ENCODE measurements at regions of chr1 and their contacts with region 1.

Region 1: GRCh38 chr1:171313835-171314320 is at the start of gene FMO4:
- DNase-seq: peak; percentile 92
- H3K4me3 Mint-ChIP-seq: peak within 1 kb of the TSS; percentile 71
- H3K27ac Mint-ChIP-seq: peak within 1 kb of the TSS; percentile 69
- H3K4me1 Mint-ChIP-seq: peaks cover 14% of the 10 kb centered on the region
- H3K27me3 Mint-ChIP-seq: no peaks in the 10 kb centered on the region
- total RNA-seq, gene FMO4: 2.0 to 2.1 TPM

Region 2: DNA sequence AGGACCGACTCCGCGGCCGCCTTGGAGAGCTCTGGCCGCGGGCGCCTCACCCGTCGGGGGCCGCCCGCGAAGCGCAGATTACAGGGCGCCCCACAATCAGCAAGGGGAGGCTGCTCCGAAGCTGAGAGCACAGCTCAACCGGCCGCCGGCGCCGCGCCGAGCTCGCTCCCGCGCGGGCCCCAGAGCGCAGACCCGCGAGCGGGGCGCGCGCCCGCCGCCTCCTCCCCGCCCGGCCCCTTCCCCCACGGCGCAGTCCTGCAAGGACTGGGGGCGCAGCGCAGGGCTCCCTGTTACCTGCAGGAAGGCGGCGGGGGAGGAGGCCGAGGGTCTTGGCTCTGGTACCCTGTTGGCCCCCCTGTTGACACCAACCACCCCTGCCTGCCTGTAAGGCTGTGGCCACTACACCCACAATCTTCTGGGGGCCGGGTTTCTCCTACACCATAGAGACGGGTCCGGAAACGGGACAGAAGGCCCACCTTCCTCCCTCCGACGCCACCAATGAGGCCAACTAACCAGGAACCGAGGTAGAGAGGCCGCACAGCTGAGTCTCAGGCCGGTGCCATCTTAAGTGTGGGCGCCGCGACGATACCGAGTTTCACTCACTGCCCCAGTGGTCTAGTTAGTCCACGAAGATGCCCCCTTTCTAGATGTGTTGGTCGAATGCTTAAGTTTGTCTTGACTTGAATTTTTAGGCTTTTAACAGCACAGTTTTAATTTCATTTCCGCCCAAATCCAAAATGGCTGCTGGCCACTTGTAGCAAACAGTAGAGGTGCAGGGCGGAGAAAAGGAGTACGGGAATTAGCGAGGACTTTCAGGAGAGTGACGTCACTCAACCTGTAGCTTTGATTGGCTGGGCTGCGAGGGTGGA is 1420.2 kb before region 1 on chr1 and contains the start of gene SCYL3:
- CTCF ChIA-PET with region 1: no interaction called
- intact Hi-C with region 1: loop called (anchors 2 kb)
- DNase-seq: peak; percentile 94
- H3K4me3 Mint-ChIP-seq: peak within 1 kb of the TSS; percentile 87
- H3K27ac Mint-ChIP-seq: peak within 1 kb of the TSS; percentile 100
- H3K4me1 Mint-ChIP-seq: peaks cover 34% of the 10 kb centered on the region
- H3K27me3 Mint-ChIP-seq: no peaks in the 10 kb centered on the region
- total RNA-seq, gene SCYL3: 8.8 TPM

Region 3: DNA sequence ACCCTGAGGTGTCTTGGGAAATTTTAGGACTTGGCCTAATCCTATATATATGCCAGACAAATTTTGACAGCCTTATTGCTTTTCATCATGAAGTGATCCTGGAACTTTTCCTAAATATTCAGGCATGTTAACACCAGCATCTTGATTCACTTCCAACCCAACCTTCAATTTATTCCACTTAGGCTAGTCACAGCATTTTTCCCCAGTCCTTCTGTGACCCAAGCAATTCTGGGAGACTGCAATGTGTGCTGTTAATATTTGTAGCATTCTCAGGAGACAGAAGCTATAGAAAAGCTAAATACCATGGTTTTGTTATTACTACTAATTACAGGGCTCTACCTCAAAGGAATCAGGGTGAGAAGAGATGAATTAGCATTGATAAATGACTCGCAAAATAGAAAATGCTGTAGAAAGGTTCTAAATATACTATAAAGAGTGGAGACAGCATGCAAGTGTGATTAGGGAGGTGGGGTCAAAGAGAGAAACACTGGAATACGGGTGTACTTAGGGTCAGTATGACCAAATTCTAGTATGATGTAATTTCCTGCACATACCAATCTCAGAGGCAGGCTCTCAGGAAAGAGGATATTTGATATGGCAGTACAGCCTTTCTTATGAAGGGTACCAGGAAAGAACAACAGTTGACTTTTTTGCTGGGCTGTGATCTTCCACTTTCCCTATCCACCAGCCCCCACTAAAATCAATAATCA is 620.9 kb before region 1 on chr1:
- CTCF ChIA-PET with region 1: no interaction called
- intact Hi-C with region 1: loop called (anchors 1 kb)
- DNase-seq: no peak
- H3K4me3 Mint-ChIP-seq: no peak overlapping the region
- H3K27ac Mint-ChIP-seq: no peak overlapping the region
- H3K4me1 Mint-ChIP-seq: no peaks in the 10 kb centered on the region
- H3K27me3 Mint-ChIP-seq: peaks cover 13% of the 10 kb centered on the region

Region 4: DNA sequence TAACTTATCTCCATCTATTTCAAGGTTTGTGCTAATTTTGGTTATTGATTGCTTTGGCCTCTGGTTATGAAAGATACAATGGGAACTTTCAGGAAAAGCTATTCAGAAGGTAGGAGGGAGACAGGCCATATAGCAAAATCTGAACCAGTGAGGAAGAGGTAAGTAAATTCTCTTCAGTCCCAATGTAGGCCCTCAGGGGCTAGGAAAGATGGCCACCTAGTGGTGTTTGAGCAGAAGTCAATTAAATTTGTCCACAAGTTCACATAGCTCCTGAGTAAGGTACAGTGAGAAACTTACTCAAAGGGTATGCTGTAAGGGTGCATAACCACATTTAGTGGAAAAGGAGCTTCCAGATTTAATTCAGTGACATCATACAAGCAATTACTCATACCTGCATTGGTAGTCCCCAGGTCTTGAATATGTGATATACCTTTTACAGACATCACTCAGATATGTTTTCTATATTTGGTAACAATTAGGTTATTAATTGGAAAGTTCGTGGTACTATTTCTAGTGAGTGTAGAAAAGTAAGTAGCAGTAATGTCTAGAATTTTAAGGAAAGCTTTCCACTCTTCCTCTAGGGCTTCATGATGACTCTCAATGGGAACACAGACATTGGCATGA is 87.0 kb before region 1 on chr1:
- CTCF ChIA-PET with region 1: interaction called, 7 read pairs
- intact Hi-C with region 1: loop called (anchors 5 kb)
- DNase-seq: peak; percentile 46
- H3K4me3 Mint-ChIP-seq: no peak overlapping the region
- H3K27ac Mint-ChIP-seq: no peak overlapping the region
- H3K4me1 Mint-ChIP-seq: peaks cover 1% of the 10 kb centered on the region
- H3K27me3 Mint-ChIP-seq: no peaks in the 10 kb centered on the region

Region 5: GRCh38 chr1:171422511-171422910 is 108.6 kb after region 1 on chr1:
- CTCF ChIA-PET with region 1: interaction called, 3 read pairs
- intact Hi-C with region 1: loop called (anchors 1 kb)
- DNase-seq: no peak
- H3K4me3 Mint-ChIP-seq: no peak overlapping the region
- H3K27ac Mint-ChIP-seq: no peak overlapping the region
- H3K4me1 Mint-ChIP-seq: peaks cover 25% of the 10 kb centered on the region
- H3K27me3 Mint-ChIP-seq: no peaks in the 10 kb centered on the region

Region 6: DNA sequence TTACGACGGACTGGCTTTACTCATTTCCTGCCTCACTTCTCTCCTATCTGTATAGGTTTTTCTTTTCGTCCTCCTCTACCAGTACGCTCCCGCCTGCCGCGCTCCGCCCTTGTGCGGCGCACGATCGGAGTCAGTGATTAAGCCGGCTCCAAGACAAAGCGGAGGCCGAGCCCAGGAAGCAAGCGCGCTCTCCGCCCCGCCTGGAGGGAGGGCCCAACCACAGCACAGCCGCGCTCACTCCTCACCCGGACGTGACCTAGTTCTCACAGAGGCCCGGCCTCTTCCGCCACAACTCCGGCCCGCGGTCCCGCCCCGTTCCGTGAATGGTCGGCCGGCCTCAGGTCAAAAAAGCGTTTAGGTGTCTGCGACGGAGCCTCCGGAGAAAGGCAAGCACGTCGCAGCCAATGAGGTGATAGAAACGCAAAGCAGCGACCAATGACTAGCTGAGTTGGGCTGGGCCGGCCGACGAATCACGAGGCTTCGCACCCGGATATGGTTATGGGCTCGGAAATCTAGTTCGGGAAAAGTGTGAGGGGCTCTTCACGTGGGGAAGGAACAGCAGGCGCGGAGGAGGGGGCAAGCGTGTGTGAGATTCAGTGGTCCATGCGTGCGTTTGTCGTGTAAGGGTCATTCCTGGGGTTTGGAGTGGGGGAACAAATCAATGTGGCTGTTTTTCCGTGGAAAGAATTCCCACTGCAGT is 467.4 kb after region 1 on chr1 and contains the start of gene METTL13:
- CTCF ChIA-PET with region 1: no interaction called
- intact Hi-C with region 1: loop called (anchors 1 kb)
- DNase-seq: peak; percentile 99
- H3K4me3 Mint-ChIP-seq: peak within 1 kb of the TSS; percentile 100
- H3K27ac Mint-ChIP-seq: peak within 1 kb of the TSS; percentile 98
- H3K4me1 Mint-ChIP-seq: peaks cover 49% of the 10 kb centered on the region
- H3K27me3 Mint-ChIP-seq: no peaks in the 10 kb centered on the region
- total RNA-seq, gene METTL13: 39.5 to 40.9 TPM

Measured in activated naive CD4-positive, alpha-beta T cell treated with anti-CD3 and anti-CD28 coated beads for 36 hours (primary cell).